ENCODE measurements at regions of chr20 and their contacts with region 1.

Region 1: GRCh38 chr20:23721962-23722361 is 28.8 kb downstream of the CST1 start:
- DNase-seq: no peak
- H3K4me3 ChIP-seq: no peak overlapping the region
- H3K27ac ChIP-seq: no peak overlapping the region
- H3K4me1 ChIP-seq: no peaks in the 10 kb centered on the region
- H3K27me3 ChIP-seq: no peaks in the 10 kb centered on the region
- CTCF ChIP-seq: no peak
- EP300 ChIP-seq: no peak
- POLR2A ChIP-seq: no peak
- RAD21 ChIP-seq: no peak

Region 2: GRCh38 chr20:23753589-23753988 is 31.6 kb after region 1 on chr20:
- CTCF ChIA-PET with region 1: no interaction called
- POLR2A ChIA-PET with region 1: no interaction called
- DNase-seq: no peak
- H3K4me3 ChIP-seq: no peak overlapping the region
- H3K27ac ChIP-seq: no peak overlapping the region
- H3K4me1 ChIP-seq: peaks cover 0 to 3% (median 0%) of the 10 kb centered on the region in 4 experiments; a peak in 2 of 7 replicates
- H3K27me3 ChIP-seq: peaks cover 25 to 54% (median 42%) of the 10 kb centered on the region in 4 experiments
- CTCF ChIP-seq: no peak
- EP300 ChIP-seq: no peak
- POLR2A ChIP-seq: no peak
- RAD21 ChIP-seq: no peak

Region 3: GRCh38 chr20:23794841-23795240 is 72.9 kb after region 1 on chr20:
- CTCF ChIA-PET with region 1: interaction called, 11 read pairs
- POLR2A ChIA-PET with region 1: no interaction called
- DNase-seq: no peak
- H3K4me3 ChIP-seq: no peak overlapping the region
- H3K27ac ChIP-seq: no peak overlapping the region
- H3K4me1 ChIP-seq: no peaks in the 10 kb centered on the region
- H3K27me3 ChIP-seq: no peaks in the 10 kb centered on the region
- CTCF ChIP-seq: no peak
- EP300 ChIP-seq: no peak
- POLR2A ChIP-seq: no peak
- RAD21 ChIP-seq: no peak

Measured in H1 (cell line).